PC-3 (cell line): ENCODE measurements at regions of chr14 and their contacts with region 1.

Region 1: GRCh38 chr14:65565948-65566347 is 153.4 kb downstream of the FUT8 start:
- DNase-seq: no peak
- ATAC-seq: no peak
- H3K4me3 ChIP-seq: no peak overlapping the region
- H3K27ac ChIP-seq: peak overlapping the region; percentile 72
- H3K4me1 ChIP-seq: peaks cover 52% of the 10 kb centered on the region
- H3K27me3 ChIP-seq: no peaks in the 10 kb centered on the region
- CTCF ChIP-seq: no peak

Region 2: DNA sequence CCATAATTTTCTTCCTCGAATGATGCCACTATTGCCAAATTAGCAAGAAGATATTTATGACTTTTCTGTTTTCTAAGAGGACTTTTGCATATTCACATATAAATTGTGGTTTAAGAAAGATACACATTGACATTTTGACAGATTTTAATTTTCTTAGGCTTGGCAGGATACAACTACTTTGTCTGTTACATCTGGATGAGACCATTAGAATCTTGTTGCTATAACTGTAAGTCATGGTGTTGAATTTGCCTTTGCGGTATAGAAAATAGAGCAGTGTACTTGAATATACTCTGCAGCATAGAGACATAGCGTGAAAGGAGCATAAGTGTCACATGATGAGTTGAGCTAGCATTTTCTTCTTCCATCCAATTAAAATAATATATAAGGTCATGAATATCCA is 15.9 kb after region 1 on chr14:
- CTCF ChIA-PET with region 1: no interaction called
- POLR2A ChIA-PET with region 1: no interaction called
- intact Hi-C with region 1: loop called (anchors 2 kb)
- DNase-seq: no peak
- ATAC-seq: no peak
- H3K4me3 ChIP-seq: no peak overlapping the region
- H3K27ac ChIP-seq: no peak overlapping the region
- H3K4me1 ChIP-seq: peaks cover 26% of the 10 kb centered on the region
- H3K27me3 ChIP-seq: no peaks in the 10 kb centered on the region
- CTCF ChIP-seq: no peak